Activated CD4-positive, alpha-beta T cell treated with anti-CD3 and anti-CD28 coated beads for 36 hours (primary cell): ENCODE measurements at regions of chr22 and their contacts with region 1.

Region 1: GRCh38 chr22:36387752-36388518 is at the start of gene MYH9:
- DNase-seq: peak; percentile 100
- ATAC-seq: peak; percentile 78
- H3K4me3 Mint-ChIP-seq: peak within 1 kb of the TSS; percentile 99
- H3K27ac Mint-ChIP-seq: peak within 1 kb of the TSS; percentile 98
- H3K4me1 Mint-ChIP-seq: peaks cover 30% of the 10 kb centered on the region
- H3K27me3 Mint-ChIP-seq: no peaks in the 10 kb centered on the region
- total RNA-seq, gene MYH9: 720 to 773 TPM

Region 2: GRCh38 chr22:36301384-36301828 is 86.5 kb before region 1 on chr22:
- CTCF ChIA-PET with region 1: interaction called, 7 read pairs
- POLR2A ChIA-PET with region 1: no interaction called
- intact Hi-C with region 1: loop called in 1 of 2 experiments (anchors 1 kb)
- DNase-seq: peak; percentile 90
- ATAC-seq: peak; percentile 82
- H3K4me3 Mint-ChIP-seq: no peak overlapping the region
- H3K27ac Mint-ChIP-seq: peak overlapping the region; percentile 72
- H3K4me1 Mint-ChIP-seq: peaks cover 7% of the 10 kb centered on the region
- H3K27me3 Mint-ChIP-seq: no peaks in the 10 kb centered on the region

Region 3: GRCh38 chr22:36359181-36359996 is 28.5 kb before region 1 on chr22:
- CTCF ChIA-PET with region 1: interaction called, 4 read pairs
- POLR2A ChIA-PET with region 1: interaction called, 5 read pairs
- intact Hi-C with region 1: loop called in 1 of 2 experiments (anchors 2 kb)
- DNase-seq: no peak
- ATAC-seq: no peak
- H3K4me3 Mint-ChIP-seq: peak overlapping the region; percentile 45
- H3K27ac Mint-ChIP-seq: peak overlapping the region; percentile 96
- H3K4me1 Mint-ChIP-seq: peaks cover 98% of the 10 kb centered on the region
- H3K27me3 Mint-ChIP-seq: no peaks in the 10 kb centered on the region

Region 4: DNA sequence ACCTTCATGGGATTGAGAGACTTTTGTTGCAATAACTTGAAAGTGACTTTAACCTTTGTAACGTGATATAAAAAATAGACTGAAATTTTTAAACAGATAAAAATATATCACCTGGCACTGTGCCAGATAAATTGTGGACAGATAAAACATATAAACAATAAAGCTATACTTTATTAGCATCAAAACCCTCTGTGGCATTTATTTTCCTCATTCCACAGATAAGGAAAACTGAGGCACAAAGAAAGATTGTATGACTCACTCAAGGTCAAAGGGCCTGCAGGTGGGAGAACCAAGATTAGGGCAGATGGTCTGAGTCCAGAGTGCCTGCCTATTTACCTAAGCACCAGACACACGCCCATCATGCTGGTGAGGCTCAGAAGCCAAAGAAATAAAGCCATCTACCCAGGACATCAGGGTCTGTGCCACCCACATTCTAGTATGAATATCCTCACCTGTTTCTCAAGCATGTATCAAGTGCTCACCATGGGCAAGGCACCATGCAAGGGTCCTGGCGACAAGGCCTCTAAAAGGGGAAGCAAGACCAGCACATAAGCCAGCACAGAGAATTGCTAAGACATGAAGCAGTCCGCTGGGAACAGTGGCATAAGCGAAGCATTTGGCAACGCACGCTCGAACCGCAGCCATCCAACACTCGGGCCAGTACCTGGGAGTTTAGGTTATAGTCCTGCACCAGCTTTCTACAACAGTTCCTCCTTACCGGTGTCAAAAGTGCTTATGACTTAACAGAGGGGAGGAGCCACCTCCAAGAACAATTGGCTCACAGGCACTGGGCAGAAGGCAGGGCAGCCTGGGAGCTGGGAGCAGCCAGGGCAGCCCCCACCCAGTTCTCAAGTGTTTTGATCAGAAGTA is 17.8 kb before region 1 on chr22:
- CTCF ChIA-PET with region 1: interaction called, 6 read pairs
- POLR2A ChIA-PET with region 1: interaction called, 16 read pairs
- intact Hi-C with region 1: loop called (anchors 1 kb)
- DNase-seq: peak; percentile 62
- ATAC-seq: peak; percentile 43
- H3K4me3 Mint-ChIP-seq: peak overlapping the region; percentile 63
- H3K27ac Mint-ChIP-seq: peak overlapping the region; percentile 98
- H3K4me1 Mint-ChIP-seq: peaks cover 97% of the 10 kb centered on the region
- H3K27me3 Mint-ChIP-seq: no peaks in the 10 kb centered on the region

Region 5: GRCh38 chr22:36411589-36412258 is 23.8 kb after region 1 on chr22:
- CTCF ChIA-PET with region 1: no interaction called
- POLR2A ChIA-PET with region 1: no interaction called
- intact Hi-C with region 1: no loop called
- DNase-seq: peak; percentile 79
- ATAC-seq: peak; percentile 62
- H3K4me3 Mint-ChIP-seq: no peak overlapping the region
- H3K27ac Mint-ChIP-seq: no peak overlapping the region
- H3K4me1 Mint-ChIP-seq: peaks cover 22% of the 10 kb centered on the region
- H3K27me3 Mint-ChIP-seq: no peaks in the 10 kb centered on the region

Region 6: DNA sequence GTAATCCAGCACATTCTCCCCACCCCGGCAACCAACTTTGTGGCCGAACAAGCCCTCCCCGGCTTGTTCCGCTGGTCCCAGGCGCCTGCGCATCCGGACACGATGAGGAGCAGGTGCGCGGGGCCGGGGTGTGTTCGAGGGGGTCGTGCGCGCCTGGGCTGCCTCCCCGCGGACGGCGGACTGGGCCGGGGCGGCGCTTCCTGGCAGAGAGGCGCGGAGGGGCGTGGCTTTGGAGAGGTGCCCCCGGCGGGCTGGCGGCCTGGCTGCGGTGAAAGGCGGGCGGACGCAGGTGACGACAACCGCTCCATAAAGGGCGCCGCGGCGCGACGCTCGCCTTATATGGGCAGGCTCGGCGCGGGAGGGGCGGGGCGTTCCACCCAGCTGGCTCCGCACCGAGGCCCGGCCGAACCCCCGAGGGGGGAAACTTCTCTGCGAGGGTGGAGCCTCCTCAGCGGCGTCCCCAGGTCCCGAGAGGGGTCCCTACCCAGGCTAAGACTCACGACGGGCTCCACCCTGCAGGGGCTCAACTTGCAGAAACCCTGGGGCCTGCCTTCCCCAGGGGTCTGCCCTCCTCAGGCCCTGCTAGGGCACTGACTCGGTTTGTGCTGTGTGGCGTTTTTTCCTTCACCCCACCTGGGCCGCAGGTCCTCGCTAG is 67.1 kb after region 1 on chr22:
- CTCF ChIA-PET with region 1: no interaction called
- POLR2A ChIA-PET with region 1: interaction called, 5 read pairs
- intact Hi-C with region 1: loop called (anchors 1 kb)
- DNase-seq: peak; percentile 98
- ATAC-seq: peak; percentile 82
- H3K4me3 Mint-ChIP-seq: peak overlapping the region; percentile 71
- H3K27ac Mint-ChIP-seq: peak overlapping the region; percentile 67
- H3K4me1 Mint-ChIP-seq: peaks cover 44% of the 10 kb centered on the region
- H3K27me3 Mint-ChIP-seq: no peaks in the 10 kb centered on the region

Region 7: DNA sequence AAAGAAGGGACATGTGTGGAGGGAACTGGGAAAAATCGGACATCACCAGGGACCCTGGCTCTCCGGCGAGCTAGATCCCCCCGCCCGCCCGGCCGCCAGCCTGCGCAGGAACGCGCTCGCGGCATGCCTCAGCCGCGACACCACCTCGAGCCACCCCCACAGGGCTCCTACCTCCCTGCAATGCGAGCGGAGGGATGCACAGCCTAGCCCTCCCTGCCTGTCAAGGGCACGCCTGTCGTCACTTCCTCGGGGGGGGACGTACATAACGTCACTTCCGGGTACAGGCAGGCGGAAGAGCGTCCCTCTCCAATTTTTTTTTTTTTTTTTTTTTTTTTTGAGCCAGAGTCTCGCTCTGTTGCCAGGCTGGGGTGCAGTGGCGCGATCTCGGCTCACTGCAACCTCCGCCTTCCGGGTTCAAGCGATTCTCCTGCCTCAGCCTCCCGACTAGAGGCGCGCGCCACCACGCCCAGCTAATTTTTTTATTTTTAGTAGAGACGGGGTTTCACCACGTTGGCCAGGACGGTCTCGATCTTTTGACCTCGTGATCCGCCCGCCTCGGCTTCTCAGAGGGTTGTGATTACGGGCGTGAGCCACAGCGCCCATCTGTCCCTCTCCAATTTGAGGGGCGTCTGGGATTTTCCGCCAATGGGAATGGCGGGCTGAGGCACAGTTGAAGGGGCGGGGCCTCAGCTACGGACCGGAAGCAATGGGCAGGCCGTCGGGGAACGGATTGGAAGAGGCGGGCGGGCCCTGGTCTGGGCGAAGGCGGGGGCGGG is 93.6 kb after region 1 on chr22 and contains the start of gene TXN2:
- CTCF ChIA-PET with region 1: no interaction called
- POLR2A ChIA-PET with region 1: interaction called, 3 read pairs
- intact Hi-C with region 1: loop called in 1 of 2 experiments (anchors 1 kb)
- DNase-seq: peak; percentile 97
- ATAC-seq: peak; percentile 89
- H3K4me3 Mint-ChIP-seq: peak within 1 kb of the TSS; percentile 81
- H3K27ac Mint-ChIP-seq: peak within 1 kb of the TSS; percentile 94
- H3K4me1 Mint-ChIP-seq: peaks cover 19% of the 10 kb centered on the region
- H3K27me3 Mint-ChIP-seq: no peaks in the 10 kb centered on the region
- total RNA-seq, gene TXN2: 95.5 to 99.1 TPM

Region 8: DNA sequence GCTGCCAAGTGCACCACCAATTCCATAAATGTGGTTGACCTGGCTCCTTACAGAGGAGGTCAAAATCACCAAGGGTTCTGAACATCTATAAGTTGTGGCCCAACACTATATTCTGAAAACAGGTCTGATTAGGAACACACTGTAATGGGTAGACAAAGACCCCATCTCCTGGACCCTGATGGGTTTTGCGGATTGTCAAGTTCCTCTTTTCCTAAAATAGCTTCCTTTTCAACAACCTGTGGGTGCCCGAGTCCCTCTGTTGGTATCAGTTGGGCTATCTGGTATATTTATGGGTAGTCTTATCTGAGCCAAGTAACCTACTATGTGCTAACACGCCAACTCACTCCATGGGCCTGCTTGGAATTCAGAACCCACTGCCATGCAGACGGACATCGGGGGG is 325.5 kb after region 1 on chr22:
- CTCF ChIA-PET with region 1: no interaction called
- POLR2A ChIA-PET with region 1: no interaction called
- intact Hi-C with region 1: no loop called
- DNase-seq: no peak
- ATAC-seq: no peak
- H3K4me3 Mint-ChIP-seq: no peak overlapping the region
- H3K27ac Mint-ChIP-seq: no peak overlapping the region
- H3K4me1 Mint-ChIP-seq: no peaks in the 10 kb centered on the region
- H3K27me3 Mint-ChIP-seq: peaks cover 8% of the 10 kb centered on the region

Region 9: DNA sequence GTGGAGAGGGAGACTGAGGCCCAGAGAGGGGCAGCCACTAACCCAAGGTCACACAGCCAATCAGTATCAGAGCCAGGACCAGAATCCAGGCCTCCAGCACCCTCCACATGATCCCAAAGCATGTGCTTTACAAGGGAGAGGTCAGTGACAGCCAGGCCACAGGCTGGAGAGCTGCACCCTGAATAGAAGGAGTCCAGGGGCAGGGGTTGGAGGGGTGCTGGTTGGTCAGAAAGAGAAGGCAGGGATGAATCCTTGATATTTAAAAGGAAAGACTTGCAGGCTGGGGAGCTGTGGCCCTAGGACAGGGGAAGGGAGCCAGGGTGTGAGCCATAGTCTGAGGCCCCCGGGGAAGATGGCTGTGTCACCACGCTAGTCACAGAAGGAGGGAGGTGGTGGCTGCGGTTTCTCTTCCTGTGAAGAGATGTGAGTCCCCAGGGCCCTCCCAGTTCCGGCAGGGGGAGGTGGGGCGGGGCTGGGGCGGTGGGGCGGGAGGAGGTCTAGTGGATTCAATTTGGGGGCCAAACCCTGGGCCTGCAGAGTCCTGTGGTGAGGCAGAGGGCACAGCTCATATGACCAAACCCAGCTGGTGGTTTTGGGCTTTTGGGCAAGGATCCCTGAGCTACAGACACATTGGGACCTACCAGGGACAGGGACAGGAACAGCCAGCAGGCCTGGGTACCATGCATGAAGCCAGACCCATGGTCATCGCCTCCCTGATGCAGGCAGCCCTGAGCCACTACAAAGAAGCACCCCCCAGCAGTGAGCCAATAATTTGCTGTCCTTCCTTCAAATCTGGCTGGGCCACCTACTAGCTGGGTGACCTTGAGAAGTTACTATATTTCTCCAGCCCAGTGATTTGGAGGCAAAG is 842.1 kb after region 1 on chr22:
- CTCF ChIA-PET with region 1: no interaction called
- POLR2A ChIA-PET with region 1: no interaction called
- intact Hi-C with region 1: loop called in 1 of 2 experiments (anchors 2 kb)
- DNase-seq: peak; percentile 97
- ATAC-seq: peak; percentile 69
- H3K4me3 Mint-ChIP-seq: peak overlapping the region; percentile 92
- H3K27ac Mint-ChIP-seq: peak overlapping the region; percentile 99
- H3K4me1 Mint-ChIP-seq: peaks cover 90% of the 10 kb centered on the region
- H3K27me3 Mint-ChIP-seq: no peaks in the 10 kb centered on the region